ENCODE measurements at regions of chr1 and their contacts with region 1.

Region 1: DNA sequence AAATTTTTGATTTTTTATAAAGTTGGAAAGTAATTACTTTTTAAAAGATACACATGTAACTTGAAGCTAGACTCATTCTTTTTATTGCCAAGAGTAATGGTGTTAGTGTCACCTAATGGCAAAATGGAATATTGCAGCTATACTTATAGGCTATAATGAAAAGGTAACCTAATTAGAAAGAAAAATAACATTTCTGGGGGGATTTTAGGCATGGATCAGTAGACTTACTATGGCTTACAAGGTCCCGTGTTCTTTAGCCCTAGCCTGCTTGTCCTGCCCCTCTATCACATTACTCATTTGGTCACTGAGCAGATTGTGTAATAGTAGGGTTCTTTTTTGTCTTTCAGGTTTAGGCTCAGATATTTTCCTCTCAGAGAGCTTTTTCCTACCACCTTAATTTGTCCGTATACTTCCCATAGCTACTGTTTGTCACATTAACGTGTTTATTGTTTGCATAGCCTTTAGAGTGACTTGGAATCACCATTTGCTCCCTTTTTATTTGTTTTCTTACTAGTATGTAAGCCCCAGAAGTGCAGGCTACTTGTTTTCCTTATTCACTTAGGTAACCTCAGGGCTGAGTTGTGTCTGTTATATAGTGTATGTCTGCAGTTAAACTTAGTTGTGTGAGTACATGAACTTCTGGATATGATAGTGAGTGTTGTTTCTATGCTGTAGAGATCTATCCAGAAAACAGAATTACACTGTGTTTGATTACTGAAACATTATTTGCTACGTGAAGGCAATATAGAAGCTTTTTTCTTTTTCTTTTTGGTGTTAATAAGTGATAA is 58.7 kb downstream of the RABGAP1L start:
- DNase-seq: no peak
- ATAC-seq: no peak

Region 2: GRCh38 chr1:173997796-173998195 is 220.2 kb before region 1 on chr1:
- intact Hi-C with region 1: loop called (anchors 10 kb)
- DNase-seq: no peak
- ATAC-seq: no peak

Region 3: GRCh38 chr1:174051956-174052355 is 166.0 kb before region 1 on chr1:
- intact Hi-C with region 1: no loop called
- DNase-seq: no peak
- ATAC-seq: peak; percentile 78

Region 4: DNA sequence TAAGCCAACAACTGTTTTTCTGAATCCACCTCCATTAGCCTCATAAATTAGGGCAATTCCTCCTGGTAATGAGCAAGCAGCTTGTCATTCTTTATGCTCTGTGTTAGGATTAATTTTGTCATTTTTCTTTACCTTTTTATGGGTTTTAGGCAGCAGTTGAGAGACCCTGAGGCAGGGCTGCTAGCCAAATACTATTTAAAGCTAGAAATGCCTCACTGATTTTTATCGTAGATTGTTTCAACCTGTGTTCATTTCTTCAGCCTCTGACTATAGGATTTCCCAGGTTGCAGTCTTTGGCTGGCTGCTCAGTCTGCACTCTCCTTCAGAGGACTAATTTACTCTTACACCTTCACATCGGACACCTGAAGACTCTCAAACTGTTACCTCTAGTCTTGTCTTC is 120.6 kb before region 1 on chr1:
- intact Hi-C with region 1: loop called (anchors 5 kb)
- DNase-seq: no peak
- ATAC-seq: no peak